Breast epithelium (tissue), 4 donors: ENCODE measurements at regions of chr7 and their contacts with region 1.

Region 1: GRCh38 chr7:36979810-36980248 is 255.5 kb upstream of the AOAH start:
- DNase-seq: no peak
- H3K4me3 ChIP-seq: no peak overlapping the region
- H3K27ac ChIP-seq: no peak overlapping the region
- H3K4me1 ChIP-seq: no peaks in the 10 kb centered on the region
- H3K27me3 ChIP-seq: no peaks in the 10 kb centered on the region
- CTCF ChIP-seq: no peak
- POLR2A ChIP-seq: no peak

Region 2: DNA sequence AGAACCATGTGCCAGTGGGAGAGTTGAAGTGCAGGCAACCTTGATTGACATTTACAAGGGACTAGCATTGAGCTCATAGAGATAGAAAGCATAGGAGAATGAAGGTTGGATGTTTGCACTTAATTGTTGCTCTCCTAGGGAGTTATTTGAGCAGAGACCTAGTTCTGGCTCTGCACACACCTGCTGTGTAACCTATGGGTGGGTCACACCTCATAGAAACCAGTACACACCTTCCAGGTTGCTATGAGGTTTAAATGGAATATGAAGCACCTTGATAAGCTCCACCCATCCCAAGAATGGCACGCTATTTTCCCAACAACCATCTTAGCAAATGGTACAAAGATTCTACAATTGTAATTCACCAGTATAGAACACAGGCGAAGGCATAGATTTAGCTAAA is 169.3 kb before region 1 on chr7:
- intact Hi-C with region 1: no loop called
- DNase-seq: no peak
- H3K4me3 ChIP-seq: no peak overlapping the region
- H3K27ac ChIP-seq: no peak overlapping the region
- H3K4me1 ChIP-seq: no peaks in the 10 kb centered on the region
- H3K27me3 ChIP-seq: no peaks in the 10 kb centered on the region
- CTCF ChIP-seq: no peak
- POLR2A ChIP-seq: no peak

Region 3: GRCh38 chr7:37173670-37174069 is 193.8 kb after region 1 on chr7:
- intact Hi-C with region 1: loop called (anchors 10 kb)
- DNase-seq: no peak
- H3K4me3 ChIP-seq: no peak overlapping the region
- H3K27ac ChIP-seq: no peak overlapping the region
- H3K4me1 ChIP-seq: no peaks in the 10 kb centered on the region
- H3K27me3 ChIP-seq: no peaks in the 10 kb centered on the region
- CTCF ChIP-seq: no peak
- POLR2A ChIP-seq: no peak

Region 4: DNA sequence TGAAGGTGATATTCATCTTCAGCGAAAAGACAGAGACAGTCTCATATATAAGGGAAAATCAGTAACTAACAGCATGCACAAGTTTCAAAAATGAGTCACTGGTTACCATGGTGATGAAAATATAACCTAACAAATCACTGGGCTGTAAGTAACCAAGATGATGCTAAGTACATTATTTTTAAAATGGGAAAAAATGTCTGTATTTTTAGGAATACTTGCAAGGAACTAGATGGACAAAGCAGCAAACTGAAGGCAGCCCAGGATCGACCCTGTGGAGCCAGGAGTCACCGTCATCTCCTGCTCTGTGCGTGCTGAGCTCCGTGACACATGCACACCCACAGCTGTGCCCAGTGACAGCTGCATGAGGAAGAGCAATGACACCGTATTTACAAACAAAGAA is 331.5 kb after region 1 on chr7:
- intact Hi-C with region 1: no loop called
- DNase-seq: no peak
- H3K4me3 ChIP-seq: no peak overlapping the region
- H3K27ac ChIP-seq: no peak overlapping the region
- H3K4me1 ChIP-seq: no peaks in the 10 kb centered on the region
- H3K27me3 ChIP-seq: no peaks in the 10 kb centered on the region
- CTCF ChIP-seq: no peak
- POLR2A ChIP-seq: no peak